ENCODE measurements at regions of chr1 and their contacts with region 1.

Region 1: GRCh38 chr1:23800400-23801337 is at the start of gene GALE:
- DNase-seq: peak; percentile 99
- ATAC-seq: peak; percentile 84
- H3K4me3 Mint-ChIP-seq: peak within 1 kb of the TSS; percentile 86
- H3K27ac Mint-ChIP-seq: peak within 1 kb of the TSS; percentile 84
- H3K4me1 Mint-ChIP-seq: peaks cover 13% of the 10 kb centered on the region
- H3K27me3 Mint-ChIP-seq: no peaks in the 10 kb centered on the region
- total RNA-seq, gene GALE: 27.4 to 35.6 TPM

Region 2: GRCh38 chr1:23168457-23169194 is 632.0 kb before region 1 on chr1 and contains the start of gene LUZP1:
- CTCF ChIA-PET with region 1: no interaction called
- POLR2A ChIA-PET with region 1: no interaction called
- intact Hi-C with region 1: loop called in 1 of 2 experiments (anchors 1 kb)
- DNase-seq: peak; percentile 94
- ATAC-seq: peak; percentile 85
- H3K4me3 Mint-ChIP-seq: peak within 1 kb of the TSS; percentile 97
- H3K27ac Mint-ChIP-seq: peak within 1 kb of the TSS; percentile 86
- H3K4me1 Mint-ChIP-seq: peaks cover 27% of the 10 kb centered on the region
- H3K27me3 Mint-ChIP-seq: no peaks in the 10 kb centered on the region
- total RNA-seq, gene LUZP1: 13.2 to 13.6 TPM

Region 3: GRCh38 chr1:23691499-23692307 is 109.0 kb before region 1 on chr1 and contains the start of gene RPL11:
- CTCF ChIA-PET with region 1: no interaction called
- POLR2A ChIA-PET with region 1: interaction called, 8 read pairs
- intact Hi-C with region 1: loop called in 1 of 2 experiments (anchors 1 kb)
- DNase-seq: peak; percentile 93
- ATAC-seq: peak; percentile 98
- H3K4me3 Mint-ChIP-seq: peak within 1 kb of the TSS; percentile 97
- H3K27ac Mint-ChIP-seq: peak within 1 kb of the TSS; percentile 98
- H3K4me1 Mint-ChIP-seq: peaks cover 43% of the 10 kb centered on the region
- H3K27me3 Mint-ChIP-seq: peaks cover under 1% of the 10 kb centered on the region
- total RNA-seq, gene RPL11: 1,003 to 1,481 TPM

Region 4: DNA sequence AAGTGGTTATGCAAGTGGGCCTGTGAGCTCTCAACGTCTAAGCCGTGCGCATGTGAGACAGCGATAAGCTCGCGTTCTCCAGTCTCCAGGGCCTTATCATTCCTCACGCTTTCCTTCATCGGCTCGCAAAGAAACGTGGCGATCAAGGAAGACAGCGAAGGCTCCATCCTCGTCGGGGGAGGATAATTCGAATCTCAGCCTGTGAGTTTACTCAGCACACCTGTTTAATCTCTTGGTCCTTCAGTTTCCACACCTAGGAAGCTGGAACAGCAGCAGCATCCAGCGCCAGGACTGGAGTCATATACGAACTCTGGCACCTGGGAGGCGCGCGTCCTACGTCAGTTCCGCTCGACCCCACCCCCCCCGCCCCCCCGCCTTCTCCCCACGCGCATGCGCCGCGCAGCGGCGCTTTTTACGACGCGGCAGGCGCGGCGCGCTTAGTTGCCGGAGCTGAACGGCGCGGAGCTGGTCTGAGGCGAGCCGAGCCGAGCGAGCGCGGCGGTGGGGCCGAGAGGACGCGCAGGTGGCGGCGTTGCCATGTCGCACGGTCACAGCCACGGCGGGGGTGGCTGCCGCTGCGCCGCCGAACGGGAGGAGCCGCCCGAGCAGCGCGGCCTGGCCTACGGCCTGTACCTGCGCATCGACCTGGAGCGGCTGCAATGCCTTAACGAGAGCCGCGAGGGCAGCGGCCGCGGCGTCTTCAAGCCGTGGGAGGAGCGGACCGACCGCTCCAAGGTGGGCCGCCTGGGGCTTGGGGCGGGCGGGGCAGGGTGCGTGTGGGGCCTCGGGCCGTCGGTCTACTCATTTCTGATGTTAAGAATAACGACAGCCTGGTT is 22.5 kb before region 1 on chr1 and contains the start of gene PITHD1:
- CTCF ChIA-PET with region 1: interaction called, 4 read pairs
- POLR2A ChIA-PET with region 1: interaction called, 6 read pairs
- intact Hi-C with region 1: loop called in 1 of 2 experiments (anchors 1 kb)
- DNase-seq: peak; percentile 90
- ATAC-seq: peak; percentile 87
- H3K4me3 Mint-ChIP-seq: peak within 1 kb of the TSS; percentile 87
- H3K27ac Mint-ChIP-seq: peak within 1 kb of the TSS; percentile 87
- H3K4me1 Mint-ChIP-seq: peaks cover 43% of the 10 kb centered on the region
- H3K27me3 Mint-ChIP-seq: no peaks in the 10 kb centered on the region
- total RNA-seq, gene PITHD1: 53.1 to 64.1 TPM

Region 5: GRCh38 chr1:23825076-23825761 is 24.6 kb after region 1 on chr1 and contains the start of gene HMGCL:
- CTCF ChIA-PET with region 1: interaction called, 5 read pairs
- POLR2A ChIA-PET with region 1: interaction called, 5 read pairs
- intact Hi-C with region 1: loop called (anchors 1 kb)
- DNase-seq: peak; percentile 95
- ATAC-seq: peak; percentile 94
- H3K4me3 Mint-ChIP-seq: peak within 1 kb of the TSS; percentile 97
- H3K27ac Mint-ChIP-seq: peak within 1 kb of the TSS; percentile 97
- H3K4me1 Mint-ChIP-seq: peaks cover 19% of the 10 kb centered on the region
- H3K27me3 Mint-ChIP-seq: no peaks in the 10 kb centered on the region
- total RNA-seq, gene HMGCL: 31.9 to 46.0 TPM

Region 6: GRCh38 chr1:23838401-23838866 is 37.8 kb after region 1 on chr1:
- CTCF ChIA-PET with region 1: no interaction called
- POLR2A ChIA-PET with region 1: no interaction called
- intact Hi-C with region 1: loop called in 1 of 2 experiments (anchors 1 kb)
- DNase-seq: peak; percentile 84
- ATAC-seq: peak; percentile 98
- H3K4me3 Mint-ChIP-seq: peak overlapping the region; percentile 45
- H3K27ac Mint-ChIP-seq: no peak overlapping the region
- H3K4me1 Mint-ChIP-seq: peaks cover 5% of the 10 kb centered on the region
- H3K27me3 Mint-ChIP-seq: peaks cover 5% of the 10 kb centered on the region

Region 7: DNA sequence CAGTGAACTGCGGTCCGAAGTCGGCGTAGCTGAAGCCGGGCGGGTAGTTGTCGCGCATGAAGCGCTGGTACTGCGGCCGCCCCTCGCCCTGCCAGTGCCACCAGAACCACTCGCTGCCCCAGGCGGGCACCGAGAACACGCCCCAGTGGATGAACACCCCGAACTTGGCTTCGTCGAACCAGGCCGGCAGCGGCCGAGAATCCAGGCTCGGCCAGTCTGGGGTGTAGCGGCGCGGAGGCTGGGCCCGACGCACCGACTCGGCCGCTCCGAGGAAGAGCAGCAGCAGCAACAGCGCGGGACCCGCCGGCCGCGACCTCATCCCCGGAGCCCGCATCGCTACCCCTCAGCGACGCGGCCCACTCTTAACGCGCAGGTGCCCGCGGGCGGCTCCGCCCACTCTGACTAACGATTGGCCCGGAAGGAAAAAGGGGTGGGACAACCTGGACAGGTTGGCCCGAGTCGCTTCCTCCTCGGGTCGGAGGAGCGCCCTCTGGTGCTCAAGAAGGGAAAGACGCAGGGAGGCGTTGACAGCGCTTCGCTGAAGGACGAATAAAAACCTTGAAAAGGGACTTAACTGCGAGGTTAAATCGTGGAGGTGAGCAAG is 67.4 kb after region 1 on chr1 and contains the start of gene FUCA1:
- CTCF ChIA-PET with region 1: no interaction called
- POLR2A ChIA-PET with region 1: no interaction called
- intact Hi-C with region 1: loop called in 1 of 2 experiments (anchors 1 kb)
- DNase-seq: peak; percentile 95
- ATAC-seq: peak; percentile 97
- H3K4me3 Mint-ChIP-seq: peak within 1 kb of the TSS; percentile 76
- H3K27ac Mint-ChIP-seq: peak within 1 kb of the TSS; percentile 77
- H3K4me1 Mint-ChIP-seq: peaks cover 19% of the 10 kb centered on the region
- H3K27me3 Mint-ChIP-seq: no peaks in the 10 kb centered on the region
- total RNA-seq, gene FUCA1: 4.2 to 4.5 TPM

Region 8: GRCh38 chr1:24003331-24003972 is 202.8 kb after region 1 on chr1:
- CTCF ChIA-PET with region 1: no interaction called
- POLR2A ChIA-PET with region 1: no interaction called
- intact Hi-C with region 1: no loop called
- DNase-seq: no peak
- ATAC-seq: no peak
- H3K4me3 Mint-ChIP-seq: no peak overlapping the region
- H3K27ac Mint-ChIP-seq: no peak overlapping the region
- H3K4me1 Mint-ChIP-seq: peaks cover 9% of the 10 kb centered on the region
- H3K27me3 Mint-ChIP-seq: peaks cover 5% of the 10 kb centered on the region

Measured in activated CD4-positive, alpha-beta T cell treated with anti-CD3 and anti-CD28 coated beads for 36 hours (primary cell).